Activated T-helper 2 cell treated with anti-CD3 and anti-CD28 coated beads, Interferon-gamma antibody, Interleukin-2, Interleukin-4, amounts not matched to agents 10 μg/mL and 5 μg/mL and 100 μg/mL, durations not matched to agents 14 hours and 24 hours and 36 hours (primary cell): ENCODE measurements at regions of chr3 and their contacts with region 1.

Region 1: GRCh38 chr3:121749276-121750086 is at the start of gene GOLGB1:
- DNase-seq: peak; percentile 91
- H3K4me3 Mint-ChIP-seq: no peak within 1 kb of the TSS
- H3K27ac Mint-ChIP-seq: no peak within 1 kb of the TSS
- H3K4me1 Mint-ChIP-seq: peaks cover 7% of the 10 kb centered on the region
- H3K27me3 Mint-ChIP-seq: peaks cover 15% of the 10 kb centered on the region
- total RNA-seq, gene GOLGB1: 26.4 and 28.2 TPM in 2 replicates

Region 2: DNA sequence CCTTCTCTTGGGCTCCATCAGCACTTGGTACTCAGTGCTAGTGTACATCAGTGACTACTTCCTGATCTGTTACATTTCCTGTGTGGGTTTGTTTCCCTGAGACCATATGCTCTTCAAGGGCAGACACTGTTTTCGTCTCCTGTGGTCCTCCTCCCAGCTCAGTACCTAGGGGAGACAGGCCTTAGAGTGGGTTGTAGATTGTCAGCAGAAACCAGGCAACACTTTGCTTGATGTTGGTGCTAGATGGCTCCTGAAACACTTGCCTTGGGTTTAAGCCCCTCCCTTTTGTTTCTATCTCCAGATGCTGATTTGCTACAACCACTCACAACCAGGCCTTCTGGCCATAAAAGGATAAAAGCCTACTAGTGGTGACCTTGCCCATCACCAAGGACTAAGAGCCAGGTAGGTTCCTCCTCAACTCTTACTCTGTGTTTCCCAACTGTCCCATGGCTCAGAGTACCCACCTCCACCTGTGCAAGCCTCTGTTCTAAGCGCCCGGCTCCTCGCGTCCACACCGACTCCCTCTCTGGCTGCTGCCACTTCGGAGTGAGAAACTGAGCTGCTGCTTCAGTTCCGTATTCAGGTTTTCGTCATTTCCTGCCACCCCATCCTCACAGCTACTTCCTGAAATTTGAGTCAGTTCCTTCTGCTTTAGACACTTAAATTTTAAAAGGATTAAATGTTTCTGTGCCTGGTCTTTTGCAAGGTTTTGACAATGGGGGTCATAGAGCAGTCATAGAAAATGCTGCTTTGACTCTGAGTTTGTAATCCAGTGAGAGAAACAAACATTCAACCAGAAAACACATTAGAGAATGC is 88.9 kb before region 1 on chr3 and contains the start of gene HCLS1:
- intact Hi-C with region 1: loop called (anchors 1 kb)
- DNase-seq: peak; percentile 72
- H3K4me3 Mint-ChIP-seq: peak within 1 kb of the TSS; percentile 97
- H3K27ac Mint-ChIP-seq: peak within 1 kb of the TSS; percentile 99
- H3K4me1 Mint-ChIP-seq: peaks cover 46% of the 10 kb centered on the region
- H3K27me3 Mint-ChIP-seq: no peaks in the 10 kb centered on the region
- total RNA-seq, gene HCLS1: 234 and 243 TPM in 2 replicates

Region 3: GRCh38 chr3:121735047-121735696 is 14.3 kb before region 1 on chr3:
- intact Hi-C with region 1: loop called (anchors 1 kb)
- DNase-seq: no peak
- H3K4me3 Mint-ChIP-seq: no peak overlapping the region
- H3K27ac Mint-ChIP-seq: no peak overlapping the region
- H3K4me1 Mint-ChIP-seq: peaks cover 35% of the 10 kb centered on the region
- H3K27me3 Mint-ChIP-seq: no peaks in the 10 kb centered on the region

Region 4: DNA sequence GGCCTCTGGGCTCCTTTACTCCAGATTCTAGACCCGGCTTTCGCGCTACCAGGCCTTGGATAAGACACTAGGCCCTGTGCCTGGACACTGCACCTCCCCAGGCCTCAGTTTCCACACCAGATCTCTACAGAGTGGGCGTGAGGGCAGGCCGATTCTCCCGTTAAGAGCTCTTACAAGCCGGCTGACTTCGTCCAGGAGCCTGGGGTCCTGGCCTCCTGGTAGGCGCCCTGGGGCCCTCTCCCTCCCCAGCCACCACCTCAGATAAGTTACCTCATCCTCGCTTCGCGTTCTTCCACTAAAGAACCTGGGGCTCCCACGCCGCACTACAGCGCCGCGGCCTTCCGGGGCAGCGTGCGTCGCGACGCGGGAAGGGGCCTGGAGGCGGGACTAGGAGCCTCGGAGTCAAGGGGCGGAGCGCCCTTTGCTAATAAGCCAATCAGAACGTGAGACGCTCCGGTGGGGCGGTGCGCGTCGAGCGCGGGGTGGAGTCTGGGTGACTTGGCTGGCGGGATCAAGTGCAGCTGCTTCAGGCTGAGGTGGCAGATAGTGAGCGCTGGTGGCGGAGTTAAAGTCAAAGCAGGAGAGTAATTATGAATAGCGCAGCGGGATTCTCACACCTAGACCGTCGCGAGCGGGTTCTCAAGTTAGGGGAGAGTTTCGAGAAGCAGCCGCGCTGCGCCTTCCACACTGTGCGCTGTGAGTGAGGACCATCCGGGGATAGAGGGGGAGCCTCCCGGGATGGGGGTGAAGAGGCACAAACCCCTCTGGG is 85.4 kb after region 1 on chr3 and contains the starts of genes EAF2 and IQCB1:
- intact Hi-C with region 1: loop called (anchors 1 kb)
- DNase-seq: peak; percentile 96
- H3K4me3 Mint-ChIP-seq: peak within 1 kb of the TSS; percentile 98
- H3K27ac Mint-ChIP-seq: peak within 1 kb of the TSS; percentile 97
- H3K4me1 Mint-ChIP-seq: peaks cover 61% of the 10 kb centered on the region
- H3K27me3 Mint-ChIP-seq: no peaks in the 10 kb centered on the region
- total RNA-seq, gene EAF2: 18.5 and 19.2 TPM in 2 replicates
- total RNA-seq, gene IQCB1: 43.4 and 44.0 TPM in 2 replicates

Region 5: GRCh38 chr3:122092460-122093165 is 343.1 kb after region 1 on chr3:
- intact Hi-C with region 1: loop called (anchors 10 kb)
- DNase-seq: peak; percentile 62
- H3K4me3 Mint-ChIP-seq: peak overlapping the region; percentile 3
- H3K27ac Mint-ChIP-seq: peak overlapping the region; percentile 85
- H3K4me1 Mint-ChIP-seq: peaks cover 57% of the 10 kb centered on the region
- H3K27me3 Mint-ChIP-seq: no peaks in the 10 kb centered on the region

Region 6: DNA sequence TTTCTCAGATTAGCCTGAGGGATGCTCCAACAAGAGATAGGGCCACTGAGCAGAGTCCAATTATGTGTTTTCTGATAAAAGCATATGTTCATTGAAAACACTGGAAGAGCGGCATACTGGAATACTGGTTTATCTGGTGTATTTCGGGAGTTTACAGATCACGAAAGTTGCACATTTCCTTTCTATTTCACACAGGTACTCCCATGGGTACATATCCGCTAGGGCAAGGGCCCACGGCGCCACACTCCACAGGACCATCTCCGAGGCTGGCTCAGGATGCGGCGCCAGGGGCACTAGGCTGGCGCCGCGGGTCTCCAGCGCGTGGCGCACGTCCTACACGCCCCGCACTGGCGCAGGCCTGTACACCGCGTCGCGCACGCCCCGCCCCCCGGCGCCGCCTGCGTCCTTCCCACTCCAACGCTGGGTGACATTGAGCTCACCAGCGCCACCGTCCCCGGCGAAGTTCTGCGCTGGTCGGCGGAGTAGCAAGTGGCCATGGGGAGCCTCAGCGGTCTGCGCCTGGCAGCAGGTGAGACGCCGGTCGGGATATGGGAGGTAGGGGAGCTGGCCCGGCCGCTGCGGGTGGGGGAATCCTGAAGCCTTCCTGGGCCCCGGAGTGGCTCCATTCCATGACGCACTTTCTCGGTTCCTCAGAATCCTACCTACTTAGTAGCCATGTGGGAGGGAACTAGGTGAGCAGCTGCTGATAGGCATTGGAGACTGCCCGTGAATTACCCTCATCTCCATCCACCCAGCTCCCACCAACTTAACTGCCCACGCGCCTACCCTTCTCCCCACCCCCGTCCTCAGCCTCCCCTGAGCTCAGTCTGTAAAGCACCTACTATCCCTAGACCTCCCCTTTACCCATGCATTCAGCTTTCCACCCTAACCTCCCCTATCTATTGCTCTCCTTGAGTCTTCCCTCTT is 634.6 kb after region 1 on chr3 and contains the start of gene FAM162A:
- intact Hi-C with region 1: loop called (anchors 5 kb)
- DNase-seq: peak; percentile 92
- H3K4me3 Mint-ChIP-seq: peak within 1 kb of the TSS; percentile 90
- H3K27ac Mint-ChIP-seq: peak within 1 kb of the TSS; percentile 94
- H3K4me1 Mint-ChIP-seq: peaks cover 62% of the 10 kb centered on the region
- H3K27me3 Mint-ChIP-seq: no peaks in the 10 kb centered on the region
- total RNA-seq, gene FAM162A: 82.2 and 85.8 TPM in 2 replicates

Region 7: GRCh38 chr3:122514123-122515019 is 764.9 kb after region 1 on chr3 and contains the start of gene KPNA1:
- intact Hi-C with region 1: loop called (anchors 10 kb)
- DNase-seq: peak; percentile 87
- H3K4me3 Mint-ChIP-seq: peak within 1 kb of the TSS; percentile 87
- H3K27ac Mint-ChIP-seq: peak within 1 kb of the TSS; percentile 90
- H3K4me1 Mint-ChIP-seq: peaks cover 28% of the 10 kb centered on the region
- H3K27me3 Mint-ChIP-seq: peaks cover 5% of the 10 kb centered on the region
- total RNA-seq, gene KPNA1: 67.5 and 70.5 TPM in 2 replicates